K562 (cell line): ENCODE measurements at regions of chr11 and their contacts with region 1.

Region 1: GRCh38 chr11:34366522-34366921 is 8.7 kb upstream of the ABTB2 start:
- DNase-seq: peak in 2 of 4 experiments; percentile 29 to 60
- ATAC-seq: no peak
- H3K4me3 ChIP-seq: no peak overlapping the region
- H3K27ac ChIP-seq: no peak overlapping the region
- H3K4me1 ChIP-seq: peaks cover 5 to 8% of the 10 kb centered on the region in 2 experiments; a peak in 3 of 5 replicates
- H3K27me3 ChIP-seq: no peaks in the 10 kb centered on the region
- CTCF ChIP-seq: peak; percentile 47 to 68 (median 56); a peak in 5 of 6 replicates
- EP300 ChIP-seq: no peak
- POLR2A ChIP-seq: no peak
- RAD21 ChIP-seq: peak; percentile 67 to 79

Region 2: GRCh38 chr11:34180040-34180813 is 186.3 kb before region 1 on chr11:
- CTCF ChIA-PET with region 1: no interaction called
- POLR2A ChIA-PET with region 1: no interaction called
- in situ Hi-C with region 1: no loop called
- intact Hi-C with region 1: no loop called
- DNase-seq: no peak
- ATAC-seq: no peak
- H3K4me3 ChIP-seq: no peak overlapping the region
- H3K27ac ChIP-seq: no peak overlapping the region
- H3K4me1 ChIP-seq: no peaks in the 10 kb centered on the region
- H3K27me3 ChIP-seq: peaks cover 27 to 56% of the 10 kb centered on the region in 2 experiments; a peak in 4 of 5 replicates
- CTCF ChIP-seq: no peak
- EP300 ChIP-seq: no peak
- POLR2A ChIP-seq: no peak
- RAD21 ChIP-seq: no peak

Region 3: DNA sequence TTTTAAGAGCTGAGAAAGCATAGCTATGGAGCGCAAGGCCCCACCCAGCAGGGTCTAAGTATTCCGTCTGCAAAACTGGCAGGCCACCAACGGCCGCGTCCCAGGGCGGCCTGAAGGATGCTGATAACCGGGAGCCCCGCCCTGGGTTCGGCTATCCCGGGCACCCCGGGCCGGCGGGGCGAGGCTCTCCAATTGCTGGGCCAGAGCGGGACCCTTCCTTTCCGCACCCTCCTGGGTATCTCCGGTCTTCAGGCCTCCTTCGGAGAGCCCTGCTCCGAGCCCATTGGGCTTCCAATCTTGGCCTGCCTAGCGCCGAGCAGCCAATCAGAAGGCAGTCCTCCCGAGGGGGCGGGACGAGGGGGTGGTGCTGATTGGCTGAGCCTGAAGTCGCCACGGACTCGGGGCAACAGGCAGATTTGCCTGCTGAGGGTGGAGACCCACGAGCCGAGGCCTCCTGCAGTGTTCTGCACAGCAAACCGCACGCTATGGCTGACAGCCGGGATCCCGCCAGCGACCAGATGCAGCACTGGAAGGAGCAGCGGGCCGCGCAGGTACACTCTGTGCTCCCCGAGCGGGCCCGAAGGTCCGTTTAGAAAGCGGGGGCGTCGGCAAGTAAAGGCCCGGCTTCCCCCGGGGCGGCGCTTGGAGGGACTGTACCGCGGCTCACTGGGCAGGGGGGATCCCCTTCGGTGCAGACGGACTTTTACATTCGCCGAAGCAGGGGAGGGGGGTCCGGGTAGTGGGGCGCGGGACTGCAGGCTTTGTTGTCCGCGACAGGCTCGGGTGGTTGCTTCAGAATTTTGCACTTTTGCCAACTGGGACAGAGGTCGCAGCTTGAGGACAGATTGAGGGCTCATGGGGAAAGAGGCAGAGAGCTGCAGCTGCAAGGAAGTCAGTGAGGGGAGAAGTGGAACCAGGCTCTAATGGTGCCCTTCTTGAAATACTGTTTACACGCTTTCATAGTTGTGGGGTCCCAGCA is 72.3 kb after region 1 on chr11 and contains the start of gene CAT:
- CTCF ChIA-PET with region 1: interaction called, 3 read pairs
- POLR2A ChIA-PET with region 1: no interaction called
- in situ Hi-C with region 1: no loop called
- intact Hi-C with region 1: loop called (anchors 2 kb)
- DNase-seq: peak; percentile 98 to 99 (median 99)
- ATAC-seq: peak; percentile 97
- H3K4me3 ChIP-seq: peak within 1 kb of the TSS; percentile 94
- H3K27ac ChIP-seq: peak within 1 kb of the TSS; percentile 90
- H3K4me1 ChIP-seq: peaks cover 4 to 23% of the 10 kb centered on the region in 2 experiments; a peak in 4 of 5 replicates
- H3K27me3 ChIP-seq: no peaks in the 10 kb centered on the region
- CTCF ChIP-seq: no peak
- EP300 ChIP-seq: peak; percentile 96
- POLR2A ChIP-seq: peak; percentile 89
- RAD21 ChIP-seq: no peak
- polyA plus RNA-seq, gene CAT: 114 to 172 TPM

Region 4: GRCh38 chr11:34468209-34468841 is 101.8 kb after region 1 on chr11:
- CTCF ChIA-PET with region 1: interaction called, 16 read pairs
- POLR2A ChIA-PET with region 1: no interaction called
- in situ Hi-C with region 1: loop called (anchors 5 kb)
- intact Hi-C with region 1: loop called (anchors 1 kb)
- DNase-seq: peak; percentile 40 to 64 (median 53)
- ATAC-seq: peak; percentile 84
- H3K4me3 ChIP-seq: no peak overlapping the region
- H3K27ac ChIP-seq: no peak overlapping the region
- H3K4me1 ChIP-seq: peaks cover 0 to 5% of the 10 kb centered on the region in 2 experiments; a peak in 3 of 5 replicates
- H3K27me3 ChIP-seq: no peaks in the 10 kb centered on the region
- CTCF ChIP-seq: peak; percentile 81 to 86 (median 82)
- EP300 ChIP-seq: no peak
- POLR2A ChIP-seq: no peak
- RAD21 ChIP-seq: peak; percentile 63 to 88

Region 5: GRCh38 chr11:34492806-34493414 is 126.4 kb after region 1 on chr11:
- CTCF ChIA-PET with region 1: interaction called, 14 read pairs
- POLR2A ChIA-PET with region 1: interaction called, 3 read pairs
- in situ Hi-C with region 1: no loop called
- intact Hi-C with region 1: loop called (anchors 1 kb)
- DNase-seq: peak; percentile 58 to 82 (median 64)
- ATAC-seq: peak; percentile 84
- H3K4me3 ChIP-seq: no peak overlapping the region
- H3K27ac ChIP-seq: no peak overlapping the region
- H3K4me1 ChIP-seq: peaks cover 0 to 4% of the 10 kb centered on the region in 2 experiments; a peak in 2 of 5 replicates
- H3K27me3 ChIP-seq: peaks cover 7 to 44% of the 10 kb centered on the region in 2 experiments; a peak in 4 of 5 replicates
- CTCF ChIP-seq: peak; percentile 54 to 87 (median 69); a peak in 5 of 6 replicates
- EP300 ChIP-seq: no peak
- POLR2A ChIP-seq: no peak
- RAD21 ChIP-seq: peak; percentile 76 to 88